B cell (primary cell): ENCODE measurements at regions of chr3 and their contacts with region 1.

Region 1: DNA sequence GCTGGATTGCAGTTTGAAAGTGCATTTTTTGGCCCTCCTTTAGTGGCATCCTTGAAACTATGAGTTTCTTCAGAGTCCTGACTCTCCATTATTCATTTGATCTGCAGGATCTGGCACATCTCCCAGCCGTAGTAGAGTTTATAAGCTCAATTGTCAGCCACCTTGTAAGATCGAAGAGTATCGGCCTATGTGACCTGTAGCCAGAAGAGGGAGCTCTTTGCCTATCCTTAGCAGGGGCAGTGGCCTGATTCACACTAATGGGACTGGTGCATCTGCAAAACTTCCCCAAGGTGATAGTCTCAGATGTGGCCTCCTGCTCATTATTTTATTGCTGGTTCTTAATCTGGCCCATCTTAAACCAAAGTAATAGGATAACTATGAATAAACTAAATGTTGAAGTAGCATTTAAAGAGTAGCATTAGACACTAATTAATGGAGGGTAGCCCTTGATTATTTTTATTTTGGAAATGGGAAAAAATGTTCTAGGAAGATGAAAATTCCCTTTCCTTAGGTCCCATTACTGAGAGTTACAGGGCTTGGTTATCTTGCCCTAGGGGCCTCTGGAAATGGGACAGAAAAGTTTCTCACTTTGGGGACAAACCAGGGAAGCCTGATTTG is 21.2 kb downstream of the GCSAM start:
- DNase-seq: peak; percentile 88
- ATAC-seq: peak; percentile 84
- H3K4me3 ChIP-seq: no peak overlapping the region
- H3K4me3 Mint-ChIP-seq: no peak overlapping the region
- H3K27ac ChIP-seq: no peak overlapping the region
- H3K27ac Mint-ChIP-seq: no peak overlapping the region
- H3K4me1 ChIP-seq: peaks cover 42 to 47% of the 10 kb centered on the region in 2 donors
- H3K4me1 Mint-ChIP-seq: peaks cover 41% of the 10 kb centered on the region
- H3K27me3 ChIP-seq: no peaks in the 10 kb centered on the region
- H3K27me3 Mint-ChIP-seq: no peaks in the 10 kb centered on the region
- CTCF ChIP-seq: peak; percentile 92

Region 2: GRCh38 chr3:112136959-112137693 is 25.2 kb after region 1 on chr3:
- CTCF ChIA-PET with region 1: interaction called, 67 read pairs
- POLR2A ChIA-PET with region 1: no interaction called
- intact Hi-C with region 1: loop called (anchors 1 kb)
- DNase-seq: peak; percentile 70
- ATAC-seq: no peak
- H3K4me3 ChIP-seq: no peak overlapping the region
- H3K4me3 Mint-ChIP-seq: peak overlapping the region; percentile 13
- H3K27ac ChIP-seq: no peak overlapping the region
- H3K27ac Mint-ChIP-seq: peak overlapping the region; percentile 15
- H3K4me1 ChIP-seq: peaks cover 51 to 52% of the 10 kb centered on the region in 2 donors
- H3K4me1 Mint-ChIP-seq: peaks cover 56% of the 10 kb centered on the region
- H3K27me3 ChIP-seq: no peaks in the 10 kb centered on the region
- H3K27me3 Mint-ChIP-seq: no peaks in the 10 kb centered on the region
- CTCF ChIP-seq: peak; percentile 75

Region 3: DNA sequence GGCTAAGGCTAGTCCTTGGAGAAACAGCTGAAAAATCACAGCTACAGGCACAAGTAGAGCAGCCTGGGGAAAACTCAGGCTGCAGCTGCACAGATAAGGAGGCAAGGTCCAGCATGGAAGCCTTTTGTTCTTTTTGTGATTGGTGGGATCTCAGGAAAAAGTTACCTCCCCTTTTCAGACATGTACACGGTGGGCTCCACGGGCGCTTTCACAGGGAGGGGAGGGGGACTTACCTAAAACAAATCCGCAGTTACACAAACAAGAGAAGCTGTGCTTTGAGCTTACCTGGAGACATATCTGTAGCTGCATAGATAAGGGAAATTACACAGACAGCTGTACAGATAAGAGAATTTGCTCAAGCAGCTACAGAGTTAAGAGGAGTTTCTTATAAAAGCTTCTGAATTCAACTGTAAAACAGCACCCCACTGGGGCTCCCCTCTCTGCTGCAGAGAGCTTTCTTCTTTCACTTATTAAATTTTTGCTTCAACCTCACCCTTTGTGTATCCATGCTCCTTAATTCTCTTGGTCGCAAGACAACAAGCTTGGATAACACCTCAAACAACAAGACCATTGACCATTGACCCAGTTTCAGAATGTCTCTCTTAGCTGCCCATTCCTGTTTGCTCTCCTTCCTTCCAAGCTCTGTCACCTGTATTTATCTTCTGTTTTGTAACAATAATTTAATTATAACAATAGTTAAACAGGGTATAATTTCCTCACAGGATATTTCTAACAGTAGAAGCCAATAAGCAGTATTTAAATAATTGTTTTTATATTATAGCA is 210.2 kb after region 1 on chr3:
- CTCF ChIA-PET with region 1: interaction called, 16 read pairs
- POLR2A ChIA-PET with region 1: no interaction called
- intact Hi-C with region 1: loop called (anchors 5 kb)
- DNase-seq: no peak
- ATAC-seq: no peak
- H3K4me3 ChIP-seq: no peak overlapping the region
- H3K4me3 Mint-ChIP-seq: no peak overlapping the region
- H3K27ac ChIP-seq: no peak overlapping the region
- H3K27ac Mint-ChIP-seq: no peak overlapping the region
- H3K4me1 ChIP-seq: no peaks in the 10 kb centered on the region
- H3K4me1 Mint-ChIP-seq: no peaks in the 10 kb centered on the region
- H3K27me3 ChIP-seq: no peaks in the 10 kb centered on the region
- H3K27me3 Mint-ChIP-seq: no peaks in the 10 kb centered on the region
- CTCF ChIP-seq: no peak

Region 4: DNA sequence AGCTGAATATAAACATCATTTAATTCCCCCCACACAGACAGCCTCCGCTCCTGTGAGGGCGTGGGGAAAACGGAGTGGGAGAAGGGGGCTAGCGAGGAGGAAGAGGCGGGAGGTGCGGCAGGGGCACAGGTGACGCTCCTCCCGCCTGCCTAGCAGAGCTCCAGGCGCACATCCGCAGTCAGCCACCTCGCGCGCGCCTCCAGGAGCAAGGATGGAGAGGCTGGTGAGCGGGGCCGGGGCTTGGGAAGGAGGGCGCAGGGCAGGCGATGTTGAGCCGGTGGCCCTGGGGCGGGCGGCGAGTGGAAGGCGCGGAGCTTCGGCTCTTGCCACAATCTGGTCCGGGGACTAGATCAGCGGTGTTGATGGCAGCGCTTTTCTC is 221.1 kb after region 1 on chr3 and contains the start of gene CD200:
- CTCF ChIA-PET with region 1: interaction called, 50 read pairs
- POLR2A ChIA-PET with region 1: interaction called, 3 read pairs
- intact Hi-C with region 1: loop called (anchors 5 kb)
- DNase-seq: peak; percentile 64
- ATAC-seq: peak; percentile 77
- H3K4me3 ChIP-seq: peak within 1 kb of the TSS; percentile 65 to 93 (median 89)
- H3K4me3 Mint-ChIP-seq: peak within 1 kb of the TSS; percentile 94
- H3K27ac ChIP-seq: peak within 1 kb of the TSS; percentile 70 to 83
- H3K27ac Mint-ChIP-seq: peak within 1 kb of the TSS; percentile 95
- H3K4me1 ChIP-seq: peaks cover 29 to 31% of the 10 kb centered on the region in 2 donors
- H3K4me1 Mint-ChIP-seq: peaks cover 50% of the 10 kb centered on the region
- H3K27me3 ChIP-seq: no peaks in the 10 kb centered on the region
- H3K27me3 Mint-ChIP-seq: no peaks in the 10 kb centered on the region
- CTCF ChIP-seq: no peak
- total RNA-seq, gene CD200: 35.0 and 36.0 TPM in 2 replicates

Region 5: DNA sequence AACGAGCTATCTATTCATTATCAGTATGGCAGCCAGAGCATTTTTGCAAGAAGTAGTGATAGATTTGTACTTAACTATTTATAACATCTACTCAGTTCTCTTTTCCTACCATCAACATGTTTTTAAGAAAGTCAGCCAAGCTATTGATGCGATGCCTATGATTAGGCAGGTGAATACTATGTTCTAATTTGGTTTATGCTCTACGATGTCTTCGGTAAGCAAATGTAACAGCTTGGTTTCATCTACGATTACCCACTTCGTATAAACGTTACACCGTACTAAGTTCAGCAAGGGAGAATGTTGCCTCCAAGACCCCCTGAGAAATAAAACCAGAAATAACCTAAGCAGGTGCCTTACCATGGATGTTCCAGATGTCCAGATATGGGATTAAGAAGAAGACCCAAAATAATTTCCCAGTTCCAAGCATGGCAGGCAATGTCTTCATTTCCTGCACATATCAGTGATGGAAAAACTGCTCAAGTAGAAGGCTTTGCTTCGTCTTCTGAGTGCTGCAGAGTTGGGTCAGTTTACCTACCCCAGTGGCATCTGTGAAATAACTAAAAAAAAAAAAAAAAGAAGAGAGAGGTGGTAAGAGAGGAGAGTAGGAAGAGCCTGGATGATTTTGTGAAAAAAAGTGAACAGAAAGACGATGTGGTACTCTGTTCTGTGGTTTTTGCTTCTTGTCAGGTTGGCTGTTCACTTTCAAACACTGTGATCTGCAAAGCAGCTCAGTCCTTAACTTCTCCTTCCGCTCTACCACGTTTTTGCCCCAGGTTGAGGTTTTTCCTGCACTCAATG is 387.2 kb after region 1 on chr3 and contains the start of gene BTLA:
- CTCF ChIA-PET with region 1: interaction called, 18 read pairs
- POLR2A ChIA-PET with region 1: interaction called, 3 read pairs
- intact Hi-C with region 1: no loop called
- DNase-seq: peak; percentile 78
- ATAC-seq: peak; percentile 71
- H3K4me3 ChIP-seq: peak within 1 kb of the TSS; percentile 66 to 96 (median 82)
- H3K4me3 Mint-ChIP-seq: peak within 1 kb of the TSS; percentile 94
- H3K27ac ChIP-seq: peak within 1 kb of the TSS; percentile 92 to 96
- H3K27ac Mint-ChIP-seq: peak within 1 kb of the TSS; percentile 97
- H3K4me1 ChIP-seq: peaks cover 47 to 53% of the 10 kb centered on the region in 2 donors
- H3K4me1 Mint-ChIP-seq: peaks cover 69% of the 10 kb centered on the region
- H3K27me3 ChIP-seq: no peaks in the 10 kb centered on the region
- H3K27me3 Mint-ChIP-seq: no peaks in the 10 kb centered on the region
- CTCF ChIP-seq: no peak
- total RNA-seq, gene BTLA: 91.6 and 101 TPM in 2 replicates

Region 6: GRCh38 chr3:112531358-112531781 is 419.5 kb after region 1 on chr3:
- CTCF ChIA-PET with region 1: interaction called, 34 read pairs
- POLR2A ChIA-PET with region 1: no interaction called
- intact Hi-C with region 1: loop called (anchors 1 kb)
- DNase-seq: peak; percentile 57
- ATAC-seq: no peak
- H3K4me3 ChIP-seq: no peak overlapping the region
- H3K4me3 Mint-ChIP-seq: no peak overlapping the region
- H3K27ac ChIP-seq: peak overlapping the region in 1 of 2 donors; percentile 18
- H3K27ac Mint-ChIP-seq: peak overlapping the region; percentile 22
- H3K4me1 ChIP-seq: no peaks in the 10 kb centered on the region
- H3K4me1 Mint-ChIP-seq: peaks cover 5% of the 10 kb centered on the region
- H3K27me3 ChIP-seq: no peaks in the 10 kb centered on the region
- H3K27me3 Mint-ChIP-seq: no peaks in the 10 kb centered on the region
- CTCF ChIP-seq: peak; percentile 82

Region 7: GRCh38 chr3:112979240-112979832 is 867.4 kb after region 1 on chr3:
- CTCF ChIA-PET with region 1: interaction called, 3 read pairs
- POLR2A ChIA-PET with region 1: no interaction called
- intact Hi-C with region 1: loop called (anchors 2 kb)
- DNase-seq: peak; percentile 71
- ATAC-seq: peak; percentile 35
- H3K4me3 ChIP-seq: no peak overlapping the region
- H3K4me3 Mint-ChIP-seq: no peak overlapping the region
- H3K27ac ChIP-seq: no peak overlapping the region
- H3K27ac Mint-ChIP-seq: no peak overlapping the region
- H3K4me1 ChIP-seq: peaks cover 41 to 49% of the 10 kb centered on the region in 2 donors
- H3K4me1 Mint-ChIP-seq: peaks cover 61% of the 10 kb centered on the region
- H3K27me3 ChIP-seq: no peaks in the 10 kb centered on the region
- H3K27me3 Mint-ChIP-seq: no peaks in the 10 kb centered on the region
- CTCF ChIP-seq: peak; percentile 94